Posterior vena cava (tissue), 2 donors: ENCODE measurements at regions of chr16 and their contacts with region 1.

Region 1: GRCh38 chr16:27367461-27368357 is 34.3 kb upstream of the IL21R start:
- DNase-seq: peak; percentile 95

Region 2: DNA sequence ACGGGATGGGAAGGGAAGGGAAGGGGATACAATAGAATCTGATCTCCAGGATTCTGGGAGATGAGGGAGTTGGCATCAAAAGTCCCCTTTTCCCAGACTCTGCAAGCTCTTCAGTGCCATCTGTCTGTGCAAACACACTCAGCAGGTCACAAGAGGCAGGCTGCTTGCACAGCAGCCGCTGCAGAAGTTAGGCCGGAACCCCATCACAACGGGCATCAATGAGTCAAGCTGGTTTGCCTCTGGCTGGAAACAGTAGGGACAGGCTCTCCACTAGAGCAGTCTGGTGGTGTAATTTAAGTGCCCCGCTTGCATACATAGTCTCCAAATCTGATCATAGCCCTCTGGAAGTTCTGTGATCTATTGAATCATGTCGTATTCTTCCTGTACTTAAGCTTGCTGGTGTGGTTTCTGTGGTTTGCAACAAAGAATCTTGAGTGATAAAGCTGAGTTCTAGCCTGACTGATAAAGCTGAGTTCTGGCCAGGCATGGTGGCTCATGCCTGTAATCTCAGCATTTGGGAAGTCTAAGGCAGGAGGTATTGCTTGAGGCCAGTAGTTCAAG is 198.1 kb before region 1 on chr16:
- intact Hi-C with region 1: loop called in 1 of 2 experiments (anchors 2 kb)
- DNase-seq: no peak

Region 3: GRCh38 chr16:27179500-27180072 is 188.1 kb before region 1 on chr16:
- intact Hi-C with region 1: loop called in 1 of 2 experiments (anchors 5 kb)
- DNase-seq: peak; percentile 96

Region 4: GRCh38 chr16:27387724-27388123 is 20.0 kb after region 1 on chr16:
- intact Hi-C with region 1: loop called in 1 of 2 experiments (anchors 2 kb)
- DNase-seq: no peak

Region 5: DNA sequence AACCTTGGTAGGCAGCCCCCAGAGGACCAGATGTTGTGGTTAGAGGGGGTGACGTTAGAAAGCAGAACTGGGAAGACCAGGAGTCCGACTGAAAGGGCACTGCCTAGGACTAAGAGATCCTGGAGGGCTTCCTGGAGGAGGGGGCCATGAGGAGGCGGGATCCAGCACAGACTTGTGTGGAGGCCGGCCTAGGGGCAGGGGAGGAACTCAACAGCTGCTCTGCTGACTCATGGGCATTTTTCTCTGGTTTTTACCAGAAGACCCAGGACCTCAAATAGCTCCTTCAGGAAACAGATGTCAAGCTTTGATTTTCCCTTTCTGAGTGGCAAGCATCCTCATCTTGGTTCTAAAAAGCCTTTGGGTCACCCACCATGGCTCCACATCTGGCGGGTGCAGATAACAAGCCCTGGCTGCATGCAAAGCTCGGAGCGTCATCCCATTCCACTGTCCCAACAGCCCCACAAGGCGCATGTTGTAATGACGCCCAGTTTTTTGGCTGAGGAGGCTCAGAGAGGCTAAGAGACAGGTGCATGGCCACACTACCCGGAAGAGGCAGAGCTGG is 63.3 kb after region 1 on chr16:
- intact Hi-C with region 1: no loop called
- DNase-seq: no peak